MCF 10A (cell line): ENCODE measurements at regions of chr1 and their contacts with region 1.

Region 1: DNA sequence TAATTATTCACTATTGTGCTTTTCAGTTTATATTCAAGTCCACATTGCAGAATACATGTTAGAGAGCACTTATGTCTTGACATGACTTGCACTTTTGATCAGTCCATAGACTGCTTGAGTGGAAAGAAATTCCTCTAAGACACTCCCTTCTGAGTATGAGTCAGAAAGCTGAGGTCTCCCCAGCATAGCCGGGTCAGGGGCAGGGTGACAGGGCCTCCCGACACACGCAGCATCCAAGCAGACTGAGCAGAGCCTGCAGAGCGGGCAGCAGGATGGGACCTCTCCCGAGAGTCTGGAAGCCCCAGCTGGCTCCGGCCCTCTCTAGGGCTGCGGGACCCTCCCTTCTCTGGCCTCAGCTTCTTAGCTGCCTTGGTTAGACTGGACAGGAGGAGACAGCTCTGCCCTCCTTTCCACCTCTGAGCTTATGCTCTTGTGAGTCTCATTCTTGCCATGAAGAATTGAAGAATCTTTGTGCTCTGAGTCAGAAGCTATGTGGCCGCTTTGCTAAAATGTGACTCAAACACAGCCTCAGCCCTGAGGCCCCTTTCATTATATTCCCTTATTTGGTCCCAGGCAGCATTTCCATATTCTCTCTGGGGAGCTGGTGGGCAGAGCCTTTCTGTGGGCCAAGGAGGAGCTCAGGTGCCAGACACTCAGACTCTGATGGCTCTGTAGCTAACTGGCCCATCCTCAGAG is 11.2 kb upstream of the CAPN2 start:
- DNase-seq: peak; percentile 97
- H3K4me3 Mint-ChIP-seq: peak overlapping the region; percentile 47
- H3K27ac Mint-ChIP-seq: peak overlapping the region; percentile 97
- H3K4me1 Mint-ChIP-seq: peaks cover 61% of the 10 kb centered on the region
- H3K27me3 Mint-ChIP-seq: no peaks in the 10 kb centered on the region
- CTCF ChIP-seq: no peak

Region 2: DNA sequence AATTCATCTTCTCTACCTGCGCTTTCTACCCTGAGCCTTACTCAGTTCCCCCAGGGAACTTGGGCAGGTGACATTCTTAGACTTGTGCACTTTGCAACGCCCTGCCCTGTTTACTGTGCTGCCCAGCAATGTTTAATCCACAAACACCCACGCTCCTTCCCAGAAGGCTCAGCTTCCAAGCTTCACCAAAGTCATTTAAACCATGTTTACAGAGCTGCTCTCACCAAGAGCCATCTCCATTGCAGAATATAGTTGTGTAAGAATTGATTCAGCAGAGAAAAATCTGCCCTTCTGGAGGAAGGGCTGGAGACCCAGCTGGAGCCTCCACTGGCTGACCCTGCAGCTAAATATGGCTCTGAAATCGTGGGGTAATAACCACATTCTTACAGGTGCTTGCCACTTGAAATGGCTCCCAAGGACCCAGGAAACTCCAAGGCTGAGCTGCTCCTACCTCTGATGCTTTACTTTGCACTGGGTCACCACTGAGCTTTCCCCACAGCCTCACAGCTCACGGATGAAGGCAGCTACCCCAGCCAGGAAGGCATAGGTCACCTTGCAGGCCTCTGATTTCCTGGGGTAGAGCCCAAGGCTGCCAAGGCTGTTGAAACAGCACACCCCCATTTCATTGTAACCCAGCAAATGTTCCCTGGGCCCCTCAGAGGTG is 20.0 kb after region 1 on chr1:
- CTCF ChIA-PET with region 1: interaction called, 19 read pairs
- POLR2A ChIA-PET with region 1: interaction called, 77 read pairs
- intact Hi-C with region 1: no loop called
- DNase-seq: peak; percentile 97
- H3K4me3 Mint-ChIP-seq: peak overlapping the region; percentile 3
- H3K27ac Mint-ChIP-seq: peak overlapping the region; percentile 82
- H3K4me1 Mint-ChIP-seq: peaks cover 67% of the 10 kb centered on the region
- H3K27me3 Mint-ChIP-seq: no peaks in the 10 kb centered on the region
- CTCF ChIP-seq: no peak

Region 3: DNA sequence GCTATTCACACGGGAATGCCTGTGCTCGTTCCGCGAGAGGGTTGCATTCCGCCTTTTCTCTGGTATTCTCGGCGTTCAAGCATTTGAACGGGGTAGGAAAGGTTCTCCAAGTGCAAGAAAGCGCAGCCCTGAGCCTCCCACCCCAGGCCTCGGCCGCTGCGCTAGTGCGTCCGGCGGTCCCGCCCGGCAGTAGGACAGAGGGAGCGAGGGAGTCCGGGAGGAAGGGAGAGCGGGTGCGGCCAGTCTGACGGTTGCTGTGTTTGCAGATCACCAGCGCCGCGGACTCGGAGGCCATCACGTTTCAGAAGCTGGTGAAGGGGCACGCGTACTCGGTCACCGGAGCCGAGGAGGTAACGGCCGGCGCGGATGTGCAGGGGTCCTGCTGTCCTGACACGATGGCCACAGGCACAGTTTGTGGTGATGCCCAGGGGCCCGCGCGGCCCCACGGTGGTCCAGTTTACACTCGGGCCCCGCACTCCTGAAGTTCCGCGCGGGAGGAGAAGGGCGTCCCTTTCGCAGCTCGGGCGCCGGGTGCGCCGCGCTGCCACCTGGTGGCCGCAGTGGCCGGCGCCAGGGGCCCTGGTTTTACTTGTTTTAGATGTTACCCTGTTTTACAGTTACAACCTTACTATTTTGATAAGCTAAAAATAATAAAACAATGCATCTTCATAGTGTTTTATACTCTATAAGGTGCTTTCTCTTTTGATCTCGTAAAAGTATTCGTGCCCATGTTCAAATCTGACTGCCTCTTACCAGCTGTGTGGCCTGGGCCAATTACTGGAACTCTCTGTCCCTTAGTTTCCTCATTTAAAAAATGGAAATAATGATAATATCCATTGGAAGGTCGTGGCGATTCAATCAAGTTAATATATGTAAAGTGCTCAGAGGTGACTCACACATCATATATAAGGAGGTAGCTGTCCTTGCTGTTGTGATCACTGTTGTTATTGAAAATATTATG is 48.0 kb after region 1 on chr1:
- CTCF ChIA-PET with region 1: interaction called, 52 read pairs
- POLR2A ChIA-PET with region 1: interaction called, 13 read pairs
- intact Hi-C with region 1: loop called (anchors 1 kb)
- DNase-seq: peak; percentile 54
- H3K4me3 Mint-ChIP-seq: no peak overlapping the region
- H3K27ac Mint-ChIP-seq: peak overlapping the region; percentile 32
- H3K4me1 Mint-ChIP-seq: peaks cover 12% of the 10 kb centered on the region
- H3K27me3 Mint-ChIP-seq: no peaks in the 10 kb centered on the region
- CTCF ChIP-seq: peak; percentile 99

Region 4: DNA sequence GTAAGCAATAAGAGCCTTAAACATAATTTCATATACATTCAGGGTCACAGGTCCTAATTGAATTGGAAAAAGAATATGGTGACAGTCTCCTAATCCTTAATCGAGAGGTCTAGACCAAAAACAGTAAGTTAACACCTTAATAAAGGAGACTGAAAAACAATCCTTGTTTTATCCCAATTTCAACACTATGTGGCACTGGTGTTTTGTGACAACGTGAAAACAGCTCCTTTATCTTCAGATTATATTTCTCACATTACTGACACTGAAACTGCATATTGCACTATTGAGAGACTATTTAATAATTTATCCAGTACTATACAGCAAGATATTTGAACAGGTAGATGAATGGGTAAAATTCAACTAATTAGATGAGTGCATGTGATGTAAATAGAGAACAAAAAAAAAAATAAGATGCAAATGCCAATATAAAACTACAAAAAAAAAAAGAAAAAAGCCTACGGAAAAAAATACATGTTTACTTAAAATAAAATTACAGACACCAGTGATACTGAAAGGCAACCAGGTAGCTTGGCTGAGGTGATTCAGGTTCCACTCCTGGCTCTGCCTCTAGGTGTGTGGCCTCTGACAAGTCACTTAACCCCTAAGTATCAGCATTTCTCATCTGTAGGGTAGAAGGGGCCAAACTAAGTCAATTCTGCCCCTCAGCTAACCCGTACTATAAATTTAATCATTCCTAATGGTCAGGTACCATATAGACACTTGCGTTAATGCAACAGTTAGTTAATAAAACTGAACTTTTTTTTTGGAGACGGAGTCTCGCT is 110.7 kb after region 1 on chr1:
- CTCF ChIA-PET with region 1: interaction called, 14 read pairs
- POLR2A ChIA-PET with region 1: interaction called, 12 read pairs
- intact Hi-C with region 1: loop called (anchors 2 kb)
- DNase-seq: peak; percentile 74
- H3K4me3 Mint-ChIP-seq: no peak overlapping the region
- H3K27ac Mint-ChIP-seq: no peak overlapping the region
- H3K4me1 Mint-ChIP-seq: peaks cover 28% of the 10 kb centered on the region
- H3K27me3 Mint-ChIP-seq: no peaks in the 10 kb centered on the region
- CTCF ChIP-seq: peak; percentile 86

Region 5: GRCh38 chr1:224052772-224053171 is 351.7 kb after region 1 on chr1:
- CTCF ChIA-PET with region 1: interaction called, 29 read pairs
- POLR2A ChIA-PET with region 1: interaction called, 5 read pairs
- intact Hi-C with region 1: loop called (anchors 2 kb)
- DNase-seq: peak; percentile 39
- H3K4me3 Mint-ChIP-seq: no peak overlapping the region
- H3K27ac Mint-ChIP-seq: no peak overlapping the region
- H3K4me1 Mint-ChIP-seq: peaks cover 10% of the 10 kb centered on the region
- H3K27me3 Mint-ChIP-seq: no peaks in the 10 kb centered on the region
- CTCF ChIP-seq: no peak

Region 6: DNA sequence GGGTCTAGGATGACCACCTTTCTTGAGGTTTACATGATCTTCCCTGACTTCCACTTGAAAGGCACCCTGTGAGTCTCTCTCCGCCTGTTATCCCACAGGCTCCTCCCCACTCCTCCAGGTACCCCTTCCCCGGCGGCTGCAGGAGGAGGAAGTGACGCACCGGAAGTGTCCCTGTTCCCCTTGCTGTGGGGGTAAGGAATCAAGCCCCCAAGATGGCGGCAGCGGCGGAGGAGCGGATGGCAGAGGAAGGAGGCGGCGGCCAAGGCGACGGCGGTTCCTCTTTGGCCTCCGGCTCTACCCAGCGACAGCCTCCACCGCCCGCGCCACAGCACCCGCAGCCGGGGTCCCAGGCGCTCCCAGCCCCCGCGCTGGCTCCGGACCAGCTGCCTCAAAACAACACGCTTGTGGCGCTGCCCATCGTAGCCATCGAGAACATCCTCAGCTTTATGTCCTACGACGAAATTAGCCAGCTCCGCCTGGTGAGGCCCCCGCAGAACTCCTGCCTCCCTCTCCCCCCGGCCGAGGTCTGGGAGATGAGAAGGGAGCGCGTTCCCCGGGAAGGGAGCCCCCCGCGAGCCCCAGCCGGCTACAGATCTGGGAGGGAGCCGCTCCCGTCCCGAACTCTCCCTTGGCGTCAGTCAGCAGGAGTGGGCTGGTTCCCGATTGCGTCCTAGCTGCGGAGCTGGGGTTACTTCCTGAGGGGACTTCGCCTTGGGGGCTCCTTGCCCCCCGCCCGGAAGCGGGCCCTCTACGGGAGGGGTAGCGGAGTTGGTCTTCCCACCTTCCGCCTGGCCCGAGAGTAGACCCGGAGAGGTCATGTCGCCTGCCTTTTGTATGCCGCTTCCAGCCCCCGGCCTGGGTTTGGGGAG is 413.1 kb after region 1 on chr1 and contains the start of gene FBXO28:
- CTCF ChIA-PET with region 1: interaction called, 4 read pairs
- POLR2A ChIA-PET with region 1: interaction called, 6 read pairs
- intact Hi-C with region 1: loop called (anchors 2 kb)
- DNase-seq: peak; percentile 99
- H3K4me3 Mint-ChIP-seq: peak within 1 kb of the TSS; percentile 90
- H3K27ac Mint-ChIP-seq: peak within 1 kb of the TSS; percentile 82
- H3K4me1 Mint-ChIP-seq: peaks cover 8% of the 10 kb centered on the region
- H3K27me3 Mint-ChIP-seq: no peaks in the 10 kb centered on the region
- CTCF ChIP-seq: no peak
- total RNA-seq, gene FBXO28: 97.6 and 110 TPM in 2 replicates